ENCODE measurements at regions of chr14 and their contacts with region 1.

Region 1: DNA sequence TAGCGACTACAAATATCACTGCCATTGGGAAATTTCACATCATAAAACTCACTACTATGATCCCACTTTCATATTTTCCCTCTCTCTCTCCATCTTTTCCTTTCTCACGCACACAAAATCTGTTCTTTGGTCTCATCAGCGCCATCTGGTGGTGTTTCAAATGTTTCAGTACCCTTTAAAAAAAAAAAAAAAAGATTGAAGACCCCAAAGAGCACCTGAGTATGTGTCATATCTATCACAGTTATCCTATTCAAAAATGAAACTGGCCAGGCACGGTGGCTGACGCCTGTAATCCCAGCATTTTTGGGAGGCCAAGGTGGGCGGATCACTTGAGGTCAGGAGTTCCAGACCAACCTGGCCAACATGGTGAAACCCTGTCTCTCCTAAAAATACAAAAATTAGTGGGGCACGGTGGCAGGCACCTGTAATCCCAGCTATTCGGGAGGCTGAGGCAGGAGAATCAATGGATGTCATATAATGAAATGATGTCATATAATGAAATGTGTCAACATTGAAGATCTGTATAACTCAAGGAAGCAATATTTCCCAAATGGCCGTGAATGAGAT is 72.4 kb downstream of the TTC9 start:
- DNase-seq: peak in 1 of 2 donors; percentile 50
- ATAC-seq: peak in 5 of 8 donors; percentile 23 to 49 (median 38)
- H3K4me3 ChIP-seq: peak overlapping the region in 1 of 10 donors; percentile 1
- H3K27ac ChIP-seq: peak overlapping the region in 2 of 10 donors; percentile 29 to 73
- H3K4me1 ChIP-seq: peaks cover 0 to 22% (median 12%) of the 10 kb centered on the region in 9 donors
- H3K27me3 ChIP-seq: peaks cover 0 to 16% (median 8%) of the 10 kb centered on the region in 7 donors
- CTCF ChIP-seq: peak; percentile 47 to 81 (median 72)

Region 2: GRCh38 chr14:69818757-69819191 is 895.4 kb before region 1 on chr14:
- intact Hi-C with region 1: loop called in 1 of 10 experiments (anchors 5 kb)
- DNase-seq: peak in 1 of 2 donors; percentile 48
- ATAC-seq: peak in 7 of 8 donors; percentile 56 to 79 (median 62)
- H3K4me3 ChIP-seq: no peak overlapping the region
- H3K27ac ChIP-seq: no peak overlapping the region
- H3K4me1 ChIP-seq: peaks cover 0 to 4% (median 0%) of the 10 kb centered on the region in 9 donors
- H3K27me3 ChIP-seq: peaks cover 0 to 51% (median 38%) of the 10 kb centered on the region in 7 donors
- CTCF ChIP-seq: peak; percentile 74 to 87 (median 82)

Region 3: DNA sequence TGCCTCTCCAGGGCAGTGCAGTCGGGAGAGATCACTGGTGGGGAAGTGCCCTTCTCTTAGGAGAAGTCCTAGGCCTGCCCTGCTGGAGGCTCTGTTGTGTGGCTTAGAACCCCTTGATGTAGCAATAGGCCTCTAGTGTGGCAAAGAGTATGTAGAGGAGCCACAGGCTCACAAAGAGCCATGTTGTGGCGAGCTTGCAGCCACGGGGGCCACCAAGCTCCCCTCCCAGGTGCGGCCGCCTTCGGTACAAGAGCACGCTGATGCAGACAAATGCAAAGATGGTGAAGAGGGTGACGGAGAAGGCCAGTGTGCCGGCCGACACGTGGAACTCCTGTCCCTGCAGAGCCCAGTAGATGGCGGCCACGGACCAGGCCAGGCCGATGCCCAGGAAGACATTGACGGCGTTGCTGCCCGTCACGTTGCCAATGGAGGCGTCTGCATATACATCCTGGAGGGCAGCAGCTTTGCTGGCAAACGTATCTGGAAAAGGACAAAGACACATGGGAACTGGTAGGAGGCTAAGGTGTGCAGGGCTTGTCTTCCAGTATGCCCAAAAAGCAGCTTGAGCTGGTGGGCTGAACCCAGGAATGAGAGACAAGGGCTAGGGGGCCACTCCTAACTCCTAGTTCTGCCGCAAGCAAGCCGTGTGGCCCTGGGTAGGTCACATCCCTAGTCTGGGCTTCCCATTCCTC is 668.1 kb before region 1 on chr14:
- intact Hi-C with region 1: loop called in 1 of 10 experiments (anchors 5 kb)
- DNase-seq: peak; percentile 37 to 61
- ATAC-seq: peak; percentile 43 to 84 (median 72)
- H3K4me3 ChIP-seq: no peak overlapping the region
- H3K27ac ChIP-seq: no peak overlapping the region
- H3K4me1 ChIP-seq: peaks cover 0 to 6% (median 0%) of the 10 kb centered on the region in 9 donors
- H3K27me3 ChIP-seq: peaks cover 0 to 44% (median 19%) of the 10 kb centered on the region in 7 donors
- CTCF ChIP-seq: peak; percentile 36 to 73 (median 68)

Region 4: GRCh38 chr14:70622111-70622712 is 91.9 kb before region 1 on chr14:
- intact Hi-C with region 1: loop called (anchors 1 to 10 kb)
- DNase-seq: peak in 1 of 2 donors; percentile 16
- ATAC-seq: peak in 4 of 8 donors; percentile 44 to 71 (median 62)
- H3K4me3 ChIP-seq: no peak overlapping the region
- H3K27ac ChIP-seq: no peak overlapping the region
- H3K4me1 ChIP-seq: peaks cover 0 to 9% (median 0%) of the 10 kb centered on the region in 9 donors
- H3K27me3 ChIP-seq: peaks cover 0 to 3% (median 0%) of the 10 kb centered on the region in 7 donors
- CTCF ChIP-seq: peak; percentile 23 to 73 (median 64)

Region 5: DNA sequence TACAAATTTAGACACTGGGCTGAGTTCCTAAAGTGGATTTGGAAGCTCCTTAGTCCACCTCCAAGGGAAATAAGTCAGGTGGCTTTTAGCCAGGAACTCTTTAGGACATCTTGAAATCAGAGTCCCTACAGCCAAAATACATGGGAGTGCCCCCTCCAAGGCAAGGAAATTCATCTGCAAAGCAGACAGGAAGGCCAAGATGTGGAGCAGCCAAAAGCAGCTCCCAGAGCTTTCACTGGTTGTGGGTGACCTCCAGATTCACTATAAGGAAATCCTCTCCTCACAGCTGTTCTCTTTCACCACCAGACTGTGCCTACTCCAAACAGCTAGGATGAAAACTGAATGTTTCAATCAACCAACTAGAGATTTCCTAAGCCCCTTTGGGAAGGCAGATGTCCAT is 65.8 kb before region 1 on chr14:
- intact Hi-C with region 1: loop called in 1 of 10 experiments (anchors 5 kb)
- DNase-seq: peak in 1 of 2 donors; percentile 30
- ATAC-seq: peak; percentile 67 to 92 (median 88)
- H3K4me3 ChIP-seq: no peak overlapping the region
- H3K27ac ChIP-seq: peak overlapping the region in 2 of 10 donors; percentile 12 to 15
- H3K4me1 ChIP-seq: peaks cover 0 to 20% (median 3%) of the 10 kb centered on the region in 9 donors
- H3K27me3 ChIP-seq: peaks cover 0 to 23% (median 0%) of the 10 kb centered on the region in 7 donors
- CTCF ChIP-seq: no peak

Region 6: DNA sequence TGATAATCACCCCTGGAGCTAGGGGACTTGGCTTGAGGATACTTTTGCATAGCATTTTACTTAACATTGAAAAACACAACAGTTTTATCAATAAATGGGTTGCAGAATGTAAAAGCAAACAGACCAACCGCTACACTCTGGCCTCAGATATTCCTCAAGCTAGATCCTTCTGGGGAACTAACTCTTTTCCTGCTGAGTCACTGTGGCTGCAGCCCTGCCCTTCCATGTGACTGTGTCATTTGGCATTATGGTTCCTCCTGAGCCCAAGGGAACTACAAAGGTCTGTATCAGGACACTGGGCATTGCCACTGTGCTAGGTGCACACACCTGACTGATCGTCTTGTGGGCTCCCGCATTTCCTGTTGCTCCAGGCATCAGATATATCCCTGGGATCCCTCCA is 15.8 kb before region 1 on chr14:
- intact Hi-C with region 1: no loop called
- DNase-seq: no peak
- ATAC-seq: peak in 5 of 8 donors; percentile 42 to 80 (median 63)
- H3K4me3 ChIP-seq: no peak overlapping the region
- H3K27ac ChIP-seq: no peak overlapping the region
- H3K4me1 ChIP-seq: peaks cover 0 to 19% (median 0%) of the 10 kb centered on the region in 9 donors
- H3K27me3 ChIP-seq: no peaks in the 10 kb centered on the region
- CTCF ChIP-seq: no peak

Region 7: GRCh38 chr14:70809543-70810244 is 95.6 kb after region 1 on chr14:
- intact Hi-C with region 1: loop called in 3 of 10 experiments (anchors 10 kb)
- DNase-seq: peak; percentile 84 to 85
- ATAC-seq: peak; percentile 92 to 98 (median 96)
- H3K4me3 ChIP-seq: peak overlapping the region; percentile 15 to 83 (median 74)
- H3K27ac ChIP-seq: peak overlapping the region in 5 of 10 donors; percentile 12 to 56 (median 23)
- H3K4me1 ChIP-seq: peaks cover 3 to 23% (median 12%) of the 10 kb centered on the region in 9 donors
- H3K27me3 ChIP-seq: peaks cover 0 to 76% (median 36%) of the 10 kb centered on the region in 7 donors
- CTCF ChIP-seq: no peak

Measured in heart right ventricle (tissue), 16 donors.